Transverse colon (tissue), 4 donors: ENCODE measurements at regions of chr14 and their contacts with region 1.

Region 1: DNA sequence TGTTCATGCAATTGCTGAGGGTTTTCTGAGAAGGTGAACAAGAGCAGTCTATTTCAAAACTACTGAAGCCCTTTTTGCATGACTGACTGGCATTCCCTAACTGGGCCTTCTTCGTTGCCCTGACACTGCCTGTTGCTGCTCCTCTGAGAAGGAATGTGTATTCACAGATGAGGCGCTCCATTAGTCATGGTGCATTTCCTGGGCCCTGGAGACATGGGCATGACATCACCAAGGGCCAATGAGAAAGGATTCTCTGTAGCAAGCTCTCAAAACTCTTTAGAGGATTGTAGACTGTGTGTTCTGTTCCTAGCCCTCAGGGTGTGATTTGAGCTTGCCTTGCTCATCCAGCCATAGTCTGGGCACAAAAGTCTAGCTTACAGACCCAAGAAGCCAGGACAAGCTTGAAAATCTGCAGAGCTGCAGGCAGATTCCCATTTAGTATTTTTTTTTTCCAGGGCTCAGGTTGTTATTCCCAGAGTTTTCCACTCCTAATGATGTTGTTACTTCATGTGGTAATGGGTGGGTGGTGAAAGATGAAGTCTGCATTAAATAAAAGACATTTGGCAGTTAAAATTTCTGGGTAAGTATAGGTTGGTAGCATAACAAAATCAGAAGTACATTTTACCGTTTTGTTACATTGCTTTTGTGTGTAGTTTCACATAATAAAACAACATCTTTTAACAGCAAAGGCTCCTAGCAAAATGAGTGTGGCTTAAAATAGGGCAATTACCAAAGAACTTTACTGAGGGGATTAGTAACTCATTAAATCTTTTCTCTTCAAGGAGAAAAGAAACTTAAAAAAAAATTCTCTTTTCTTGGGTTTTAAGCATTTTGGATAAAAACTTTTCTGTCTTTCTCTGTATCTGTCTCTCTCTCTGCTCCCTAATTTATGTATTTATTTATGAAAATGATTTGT is 318.4 kb downstream of the RAD51B start:
- DNase-seq: peak; percentile 36
- H3K4me3 ChIP-seq: no peak overlapping the region
- H3K27ac ChIP-seq: peak overlapping the region; percentile 83 to 89 (median 88)
- H3K4me1 ChIP-seq: peaks cover 27 to 51% (median 36%) of the 10 kb centered on the region in 4 donors
- H3K27me3 ChIP-seq: no peaks in the 10 kb centered on the region
- CTCF ChIP-seq: no peak
- EP300 ChIP-seq: no peak
- POLR2A ChIP-seq: no peak

Region 2: GRCh38 chr14:67831113-67831512 is 306.8 kb before region 1 on chr14:
- in situ Hi-C with region 1: no loop called
- intact Hi-C with region 1: no loop called
- DNase-seq: no peak
- H3K4me3 ChIP-seq: no peak overlapping the region
- H3K27ac ChIP-seq: no peak overlapping the region
- H3K4me1 ChIP-seq: no peaks in the 10 kb centered on the region
- H3K27me3 ChIP-seq: no peaks in the 10 kb centered on the region
- CTCF ChIP-seq: no peak
- EP300 ChIP-seq: no peak
- POLR2A ChIP-seq: no peak

Region 3: DNA sequence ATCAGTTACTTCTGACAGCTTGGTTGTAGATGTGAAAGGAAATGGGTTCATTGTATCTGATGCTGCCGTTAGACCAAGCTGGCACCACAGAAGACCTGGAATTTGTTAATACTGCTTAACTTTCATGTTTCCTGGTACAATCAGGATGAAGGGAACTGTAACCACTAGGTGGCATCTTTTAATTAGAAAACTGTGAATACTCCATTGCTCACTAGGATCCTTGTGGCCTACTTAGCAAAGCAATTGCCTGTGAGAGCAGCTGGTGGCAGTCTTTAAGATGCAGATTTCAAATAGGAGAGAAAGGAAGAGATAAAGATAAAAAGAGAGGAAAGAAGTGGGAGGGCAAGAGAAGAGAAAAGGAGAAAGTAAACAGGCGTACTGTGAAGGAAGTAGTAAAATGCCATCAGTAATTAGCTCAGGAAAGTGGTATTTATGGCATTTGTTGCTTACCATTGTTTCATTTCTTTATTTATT is 203.9 kb before region 1 on chr14:
- in situ Hi-C with region 1: no loop called
- intact Hi-C with region 1: no loop called
- DNase-seq: peak; percentile 18
- H3K4me3 ChIP-seq: no peak overlapping the region
- H3K27ac ChIP-seq: peak overlapping the region; percentile 56 to 67 (median 61)
- H3K4me1 ChIP-seq: peaks cover 6 to 14% (median 10%) of the 10 kb centered on the region in 4 donors
- H3K27me3 ChIP-seq: no peaks in the 10 kb centered on the region
- CTCF ChIP-seq: peak; percentile 60 to 90 (median 68)
- EP300 ChIP-seq: no peak
- POLR2A ChIP-seq: no peak

Region 4: GRCh38 chr14:67963960-67964744 is 173.8 kb before region 1 on chr14:
- in situ Hi-C with region 1: loop called in 1 of 4 experiments (anchors 25 kb)
- intact Hi-C with region 1: no loop called
- DNase-seq: no peak
- H3K4me3 ChIP-seq: peak overlapping the region in 1 of 4 donors; percentile 21
- H3K27ac ChIP-seq: peak overlapping the region; percentile 81 to 87 (median 85)
- H3K4me1 ChIP-seq: peaks cover 19 to 69% (median 48%) of the 10 kb centered on the region in 4 donors
- H3K27me3 ChIP-seq: no peaks in the 10 kb centered on the region
- CTCF ChIP-seq: peak in 1 of 5 experiments; percentile 8
- EP300 ChIP-seq: peak; percentile 3
- POLR2A ChIP-seq: no peak

Region 5: DNA sequence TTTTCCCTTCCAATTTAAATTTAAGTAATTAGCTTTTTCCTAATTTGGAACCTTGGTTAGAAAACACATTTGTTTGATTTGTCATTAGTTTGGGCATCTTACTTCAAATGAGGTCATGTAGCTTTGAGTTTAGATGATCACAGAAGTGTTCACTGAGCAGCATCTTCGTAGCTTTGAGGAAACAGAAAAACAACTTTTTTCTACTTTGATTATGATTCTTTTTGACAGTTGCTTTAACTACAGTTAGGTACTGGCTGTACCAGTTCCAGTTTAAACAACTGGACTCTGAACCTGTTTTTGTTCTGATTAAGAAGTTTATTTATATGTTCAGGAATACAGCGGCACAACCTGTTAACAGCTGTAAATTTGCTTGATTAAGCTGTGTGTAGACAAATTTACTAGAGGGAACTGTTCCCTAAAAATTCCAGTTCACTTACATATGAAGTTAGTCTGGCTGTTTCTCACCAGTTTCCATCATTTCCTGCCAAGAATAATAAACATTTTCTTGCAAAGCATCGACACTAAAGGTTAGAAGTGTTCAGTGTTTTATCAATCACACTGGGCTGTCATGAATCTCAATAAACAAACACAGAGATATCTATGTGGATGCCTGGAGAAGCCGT is 126.4 kb before region 1 on chr14:
- in situ Hi-C with region 1: no loop called
- intact Hi-C with region 1: loop called (anchors 10 kb)
- DNase-seq: no peak
- H3K4me3 ChIP-seq: no peak overlapping the region
- H3K27ac ChIP-seq: peak overlapping the region; percentile 23 to 79 (median 70)
- H3K4me1 ChIP-seq: peaks cover 0 to 35% (median 24%) of the 10 kb centered on the region in 4 donors
- H3K27me3 ChIP-seq: no peaks in the 10 kb centered on the region
- CTCF ChIP-seq: no peak
- EP300 ChIP-seq: peak; percentile 65
- POLR2A ChIP-seq: no peak

Region 6: DNA sequence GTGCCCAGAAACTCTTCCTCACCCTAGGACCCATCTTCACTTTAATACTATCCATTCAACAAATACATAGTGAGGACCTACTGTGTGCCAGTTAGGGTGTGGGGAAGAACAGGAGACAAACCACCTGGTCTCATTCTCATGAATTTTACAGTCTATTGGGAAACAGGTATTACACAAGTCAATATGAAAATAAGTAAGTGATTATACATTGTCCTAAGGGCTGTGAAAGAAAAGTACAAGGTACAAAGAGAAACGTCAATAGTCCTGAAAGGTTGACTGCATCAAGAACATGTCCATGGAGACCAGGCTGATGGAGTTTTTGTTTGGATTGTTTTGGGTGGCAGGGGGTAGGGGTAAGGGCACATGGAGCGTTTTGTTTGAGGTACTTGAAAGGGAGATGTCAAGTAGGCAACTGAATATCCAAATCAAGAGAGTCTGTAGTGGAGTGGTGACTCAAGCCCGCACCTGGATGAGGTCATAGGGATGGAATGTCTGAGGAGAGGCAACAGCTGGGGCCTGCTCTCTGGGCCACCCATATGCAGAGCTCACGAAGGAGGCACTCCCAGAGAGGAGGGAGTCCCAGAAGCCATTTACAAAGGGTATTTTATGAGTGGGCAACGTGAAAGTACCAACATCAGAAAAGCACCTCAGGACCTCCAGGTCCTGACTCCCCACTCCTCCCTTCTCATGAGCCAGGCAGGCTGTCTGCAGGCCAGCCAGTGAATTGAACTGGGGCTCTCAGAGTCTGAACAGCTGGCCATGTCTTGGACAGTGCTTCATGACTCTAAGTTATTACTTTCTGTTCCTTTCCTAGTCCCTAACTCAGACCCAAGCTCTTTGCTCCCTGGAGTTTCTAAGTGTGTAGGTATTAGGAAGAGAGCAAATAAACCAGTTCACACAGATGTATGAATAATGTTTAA is 382.9 kb after region 1 on chr14:
- in situ Hi-C with region 1: no loop called
- intact Hi-C with region 1: loop called (anchors 10 kb)
- DNase-seq: peak; percentile 62
- H3K4me3 ChIP-seq: no peak overlapping the region
- H3K27ac ChIP-seq: peak overlapping the region; percentile 61 to 75 (median 70)
- H3K4me1 ChIP-seq: peaks cover 22 to 58% (median 32%) of the 10 kb centered on the region in 4 donors
- H3K27me3 ChIP-seq: no peaks in the 10 kb centered on the region
- CTCF ChIP-seq: no peak
- EP300 ChIP-seq: no peak
- POLR2A ChIP-seq: no peak

Region 7: GRCh38 chr14:69142101-69142500 is 1004.1 kb after region 1 on chr14:
- in situ Hi-C with region 1: no loop called
- intact Hi-C with region 1: no loop called
- DNase-seq: no peak
- H3K4me3 ChIP-seq: no peak overlapping the region
- H3K27ac ChIP-seq: no peak overlapping the region
- H3K4me1 ChIP-seq: peaks cover 5 to 21% (median 17%) of the 10 kb centered on the region in 4 donors
- H3K27me3 ChIP-seq: no peaks in the 10 kb centered on the region
- CTCF ChIP-seq: no peak
- EP300 ChIP-seq: no peak
- POLR2A ChIP-seq: no peak